ENCODE measurements at regions of chr12 and their contacts with region 1.

Region 1: DNA sequence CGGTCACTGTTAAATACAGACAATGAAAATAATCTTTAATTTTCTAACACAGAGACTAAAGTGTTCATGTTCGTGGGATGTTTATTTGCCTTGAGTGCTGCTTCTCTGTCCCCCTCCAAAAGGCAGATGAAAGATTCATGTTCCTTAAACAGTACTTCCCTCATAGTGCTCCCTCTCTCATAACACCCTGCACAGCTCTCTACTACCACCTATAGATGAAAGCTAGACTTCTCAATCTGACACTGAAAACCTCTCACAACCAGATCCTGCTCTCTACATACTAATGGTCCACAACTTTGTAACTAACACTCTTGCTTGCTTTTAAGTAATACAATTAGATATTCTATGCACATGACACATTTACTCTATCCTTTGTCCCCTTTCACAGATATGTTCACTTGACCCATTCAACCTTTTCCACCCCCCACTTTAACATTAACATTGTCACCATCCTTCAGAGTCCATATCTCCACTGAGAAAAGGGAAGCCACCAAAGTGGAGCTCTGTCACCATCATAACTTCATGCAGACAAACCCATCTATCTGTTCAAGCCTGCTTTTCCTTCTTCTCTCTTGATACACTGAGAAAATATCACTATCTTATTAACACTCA is 266.4 kb upstream of the USP15 start:
- DNase-seq: peak; percentile 17
- CTCF ChIP-seq: peak; percentile 50

Region 2: GRCh38 chr12:62006076-62006732 is 12.4 kb after region 1 on chr12:
- CTCF ChIA-PET with region 1: interaction called, 10 read pairs
- POLR2A ChIA-PET with region 1: no interaction called
- DNase-seq: peak; percentile 44
- CTCF ChIP-seq: peak; percentile 70

Measured in GM10248 (cell line).